ENCODE measurements at regions of chr16 and their contacts with region 1.

Region 1: GRCh38 chr16:78122774-78123315 is 23.4 kb downstream of the WWOX start:
- DNase-seq: peak in 3 of 7 donors; percentile 16 to 35 (median 33)
- H3K4me3 ChIP-seq: peak overlapping the region in 1 of 4 donors; percentile 23
- H3K27ac ChIP-seq: peak overlapping the region in 1 of 5 donors; percentile 37
- H3K4me1 ChIP-seq: peaks cover 0 to 17% of the 10 kb centered on the region in 2 donors
- H3K27me3 ChIP-seq: no peaks in the 10 kb centered on the region
- CTCF ChIP-seq: peak; percentile 36 to 80 (median 61)
- POLR2A ChIP-seq: no peak

Region 2: DNA sequence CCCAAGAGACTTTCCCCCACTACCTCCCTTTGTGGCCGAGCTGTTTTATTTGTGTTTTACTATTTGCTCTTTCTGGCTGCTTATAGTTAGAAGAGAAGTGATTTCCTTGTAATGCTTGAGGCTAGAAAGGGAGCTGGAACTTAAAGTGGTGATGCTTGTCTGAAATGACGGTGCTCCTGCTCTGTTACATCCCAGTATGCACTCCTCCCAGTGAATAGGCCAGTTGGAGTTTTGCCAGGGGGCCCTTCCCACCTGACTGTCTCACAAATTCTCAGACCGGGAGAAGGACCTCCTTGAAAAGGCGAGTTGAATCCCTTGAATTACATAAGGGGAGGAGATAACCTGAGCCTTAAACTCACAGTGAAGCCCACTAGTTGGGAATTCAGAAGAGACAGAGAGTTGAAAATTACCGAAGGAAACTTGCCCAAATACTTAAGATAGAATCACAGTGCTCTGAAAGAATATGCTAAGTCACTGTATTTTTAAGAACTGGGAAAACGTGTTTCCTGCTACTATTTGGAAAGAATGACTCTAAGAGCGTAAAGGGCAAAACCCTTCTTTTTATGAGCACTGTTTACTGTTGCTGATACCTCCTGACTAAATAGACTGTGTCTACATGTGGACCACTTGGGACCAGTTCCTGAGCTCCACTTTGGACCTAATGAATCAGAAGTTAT is 185.2 kb before region 1 on chr16:
- intact Hi-C with region 1: no loop called
- DNase-seq: no peak
- H3K4me3 ChIP-seq: no peak overlapping the region
- H3K27ac ChIP-seq: no peak overlapping the region
- H3K4me1 ChIP-seq: no peaks in the 10 kb centered on the region
- H3K27me3 ChIP-seq: no peaks in the 10 kb centered on the region
- CTCF ChIP-seq: no peak
- POLR2A ChIP-seq: no peak

Region 3: DNA sequence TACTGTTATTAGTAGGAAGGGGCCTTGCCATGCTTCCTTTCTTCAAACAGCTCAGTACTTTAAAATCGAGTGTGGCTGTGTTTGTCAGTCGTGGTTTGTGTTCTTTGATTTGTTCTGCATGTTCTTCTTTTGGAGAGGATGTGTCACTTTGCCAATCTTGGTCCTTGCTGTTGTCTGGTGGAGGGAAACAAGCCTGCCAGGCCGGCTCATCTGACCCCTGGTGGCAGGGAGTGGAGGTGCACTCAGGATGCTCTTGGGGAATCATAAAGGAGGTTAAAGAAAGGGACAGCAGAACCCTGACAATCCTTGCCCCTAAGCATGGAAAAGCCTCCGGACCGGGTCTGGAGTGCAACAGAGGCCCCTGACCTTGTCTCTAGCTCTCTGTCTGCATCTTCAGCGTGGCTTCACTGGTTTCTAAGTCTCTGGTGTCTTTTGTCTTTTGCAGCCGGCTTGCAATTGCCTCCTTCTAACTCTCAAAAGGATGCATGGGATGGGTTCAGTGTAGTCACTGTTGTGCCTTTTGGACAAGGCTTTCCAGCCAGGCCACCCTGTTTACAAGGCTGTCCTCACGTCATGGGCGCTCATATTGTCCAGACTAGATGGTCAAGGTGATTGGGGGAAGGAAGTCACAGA is 112.4 kb after region 1 on chr16:
- intact Hi-C with region 1: loop called (anchors 5 to 10 kb)
- DNase-seq: peak; percentile 63 to 87 (median 75)
- H3K4me3 ChIP-seq: no peak overlapping the region
- H3K27ac ChIP-seq: no peak overlapping the region
- H3K4me1 ChIP-seq: no peaks in the 10 kb centered on the region
- H3K27me3 ChIP-seq: no peaks in the 10 kb centered on the region
- CTCF ChIP-seq: peak; percentile 76 to 94 (median 89)
- POLR2A ChIP-seq: no peak

Region 4: GRCh38 chr16:78269256-78269655 is 146.4 kb after region 1 on chr16:
- intact Hi-C with region 1: no loop called
- DNase-seq: no peak
- H3K4me3 ChIP-seq: no peak overlapping the region
- H3K27ac ChIP-seq: no peak overlapping the region
- H3K4me1 ChIP-seq: no peaks in the 10 kb centered on the region
- H3K27me3 ChIP-seq: no peaks in the 10 kb centered on the region
- CTCF ChIP-seq: no peak
- POLR2A ChIP-seq: no peak

Region 5: DNA sequence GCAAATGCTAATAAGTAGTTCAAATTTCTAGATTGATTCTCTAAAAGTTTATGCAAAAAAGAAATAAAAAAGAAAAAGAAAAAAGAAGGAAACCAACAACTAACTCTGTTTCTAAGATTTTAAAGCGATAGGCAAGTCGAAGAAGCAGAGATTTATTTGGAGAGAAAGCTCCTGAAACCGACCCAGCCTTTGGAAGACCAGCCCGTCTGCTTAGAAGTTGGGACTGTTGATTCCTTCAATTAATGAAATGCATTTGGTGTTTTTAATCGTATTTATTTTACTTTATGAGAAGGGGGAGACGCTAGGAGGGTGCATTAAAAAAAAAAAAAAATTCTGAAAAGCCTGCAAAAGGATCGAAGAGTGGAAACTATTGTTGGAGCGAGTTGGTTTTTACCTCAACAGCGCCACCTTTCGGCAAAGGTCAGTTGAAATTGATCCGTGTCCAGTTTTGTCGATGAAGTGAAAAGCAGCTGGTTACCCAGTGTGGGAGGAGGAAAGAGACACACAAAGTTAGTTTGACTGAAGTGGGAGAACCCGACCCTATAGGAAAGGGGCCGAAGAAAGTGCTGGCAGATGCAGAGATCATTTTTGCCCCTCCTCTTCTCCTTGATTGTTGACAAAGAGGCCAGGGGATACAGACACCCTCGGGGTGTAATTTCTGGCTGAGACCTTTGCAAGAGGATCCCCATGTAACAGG is 1479.2 kb after region 1 on chr16:
- intact Hi-C with region 1: loop called in 1 of 2 experiments (anchors 10 kb)
- DNase-seq: peak; percentile 79 to 94 (median 84)
- H3K4me3 ChIP-seq: peak overlapping the region in 3 of 4 donors; percentile 63 to 95 (median 91)
- H3K27ac ChIP-seq: peak overlapping the region; percentile 73 to 96 (median 95)
- H3K4me1 ChIP-seq: peaks cover 0 to 7% of the 10 kb centered on the region in 2 donors
- H3K27me3 ChIP-seq: no peaks in the 10 kb centered on the region
- CTCF ChIP-seq: peak; percentile 73 to 86 (median 81)
- POLR2A ChIP-seq: no peak

Measured in adrenal gland (tissue), 19 donors.